ENCODE measurements at regions of chr10 and their contacts with region 1.

Region 1: GRCh38 chr10:107561136-107561650 is 396.7 kb upstream of the SORCS1 start:
- DNase-seq: no peak
- ATAC-seq: no peak

Region 2: DNA sequence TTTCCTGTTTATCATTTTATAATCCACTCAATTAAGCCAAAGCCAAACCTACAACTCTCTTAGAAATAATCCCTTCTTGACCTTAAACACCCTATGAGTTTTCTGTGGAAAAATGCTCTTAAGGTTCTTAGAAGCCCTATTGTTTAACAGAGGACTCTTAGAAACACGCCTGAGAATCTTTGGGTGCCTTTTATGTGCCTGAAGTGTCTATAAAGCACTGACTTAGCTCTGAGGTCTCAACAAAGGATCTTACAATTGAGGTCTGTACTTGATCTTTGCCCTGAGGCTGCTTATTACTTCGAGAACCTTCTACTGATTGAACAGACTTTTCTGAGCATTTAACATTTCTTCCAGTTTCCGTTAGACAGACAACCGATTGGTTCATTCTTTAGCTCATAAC is 43.4 kb before region 1 on chr10:
- intact Hi-C with region 1: loop called (anchors 10 kb)
- DNase-seq: no peak
- ATAC-seq: no peak

Region 3: GRCh38 chr10:107576746-107577145 is 15.6 kb after region 1 on chr10:
- intact Hi-C with region 1: no loop called
- DNase-seq: no peak
- ATAC-seq: peak; percentile 62

Region 4: GRCh38 chr10:107689323-107689722 is 128.1 kb after region 1 on chr10:
- intact Hi-C with region 1: no loop called
- DNase-seq: no peak
- ATAC-seq: no peak